ENCODE measurements at regions of chr1 and their contacts with region 1.

Region 1: DNA sequence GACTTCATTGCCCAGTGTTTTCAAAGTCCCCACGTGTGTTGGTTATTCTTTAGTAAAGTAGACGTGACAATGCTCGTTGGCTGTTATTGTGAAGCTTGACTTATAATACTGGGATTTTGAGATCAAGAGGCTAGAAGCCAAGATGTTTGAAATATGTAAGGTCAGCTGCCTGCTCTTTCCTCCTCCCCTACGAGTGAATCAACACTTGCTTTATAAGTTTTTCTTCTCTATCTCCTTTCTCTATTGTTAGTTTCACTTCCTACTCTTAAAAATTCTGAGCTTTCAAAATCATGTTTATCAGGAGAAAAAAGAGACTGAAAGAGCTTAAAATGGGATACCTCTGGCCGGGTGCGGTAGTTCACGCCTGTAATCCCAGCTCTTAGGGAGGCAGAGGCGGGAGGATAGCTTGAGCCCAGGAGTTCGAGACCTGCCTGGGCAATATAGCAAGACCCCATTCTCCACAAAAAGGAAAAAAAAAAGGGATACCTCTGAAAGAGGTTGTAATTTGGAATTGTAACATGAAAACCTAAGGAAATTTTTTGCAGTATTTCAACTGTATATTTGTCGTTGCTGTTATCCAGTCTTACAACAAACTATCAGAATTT is 72.0 kb downstream of the EPB41 start:
- DNase-seq: no peak
- H3K4me3 ChIP-seq: no peak overlapping the region
- H3K27ac ChIP-seq: no peak overlapping the region
- H3K4me1 ChIP-seq: no peaks in the 10 kb centered on the region
- H3K27me3 ChIP-seq: no peaks in the 10 kb centered on the region
- CTCF ChIP-seq: no peak

Region 2: DNA sequence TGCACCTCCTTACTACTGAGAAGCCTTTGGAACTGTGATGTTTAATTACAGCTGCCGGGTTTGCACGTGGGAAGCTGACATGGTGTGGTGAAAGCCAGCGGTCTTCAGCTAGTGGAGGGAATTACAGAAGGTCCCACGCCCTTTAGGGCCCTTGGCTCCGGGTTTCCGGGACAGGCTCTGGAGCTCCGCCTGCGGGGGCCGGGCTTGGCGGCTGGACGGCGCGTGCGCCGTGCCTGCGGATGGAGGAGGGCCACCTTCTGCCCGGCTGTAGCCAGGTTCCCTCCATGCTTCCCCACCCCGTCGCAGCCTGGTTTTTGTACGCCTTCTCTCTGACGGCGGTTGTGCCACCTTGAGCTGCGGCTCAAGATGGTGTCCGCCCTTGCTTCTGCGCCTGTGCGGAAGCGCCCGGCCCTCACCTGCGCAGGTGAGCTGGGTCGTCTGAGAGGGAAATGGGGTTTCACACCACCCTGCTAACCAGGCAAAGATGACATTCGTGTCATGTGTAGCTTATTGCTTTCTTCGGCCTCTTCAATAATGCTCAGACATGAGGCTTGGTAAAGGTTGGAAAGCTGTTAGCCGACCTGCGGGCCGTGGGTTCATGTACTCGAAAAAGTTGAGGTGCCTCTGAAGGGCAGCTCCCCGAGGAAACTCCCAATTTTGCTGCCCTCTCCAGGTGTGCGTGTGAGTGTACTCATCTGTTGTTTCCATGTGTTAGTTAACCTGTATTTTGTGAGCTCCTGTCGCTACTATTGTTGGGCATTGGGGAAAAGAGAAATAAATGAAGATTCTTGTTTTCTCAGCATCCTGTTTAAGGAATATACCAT is 211.1 kb before region 1 on chr1:
- intact Hi-C with region 1: no loop called
- DNase-seq: peak; percentile 66 to 80
- H3K4me3 ChIP-seq: peak overlapping the region; percentile 27 to 49
- H3K27ac ChIP-seq: no peak overlapping the region
- H3K4me1 ChIP-seq: peaks cover 0 to 14% (median 10%) of the 10 kb centered on the region in 4 donors
- H3K27me3 ChIP-seq: no peaks in the 10 kb centered on the region
- CTCF ChIP-seq: no peak

Region 3: DNA sequence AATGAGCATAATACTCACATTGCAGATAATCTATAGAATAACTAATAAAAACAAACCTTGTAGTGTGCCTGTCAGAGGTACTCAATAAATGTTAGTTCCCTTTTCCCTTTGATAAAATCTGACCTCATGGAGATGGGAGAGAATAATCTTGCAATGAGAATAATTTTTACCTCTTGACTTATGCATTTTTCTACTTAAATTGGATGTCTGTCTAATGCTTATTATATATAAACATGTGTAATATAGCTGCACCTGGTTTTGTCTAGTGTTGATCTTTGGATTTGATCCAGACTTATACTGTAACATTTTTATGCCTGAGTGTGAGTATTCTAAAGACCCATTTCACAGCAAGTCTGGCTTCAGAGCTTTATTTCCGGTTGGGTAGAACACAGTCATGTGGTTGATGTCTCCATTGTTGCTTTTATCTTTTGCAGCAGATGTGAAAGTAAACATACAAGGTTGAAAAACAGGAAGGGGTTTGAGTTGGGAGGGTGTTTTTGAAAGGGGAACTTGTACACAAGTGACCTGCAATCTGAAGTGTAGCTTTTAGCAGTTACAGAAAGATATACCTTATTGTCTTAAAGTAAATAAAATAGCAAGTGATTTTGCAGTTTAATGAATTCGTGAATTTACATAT is 59.7 kb before region 1 on chr1:
- intact Hi-C with region 1: no loop called
- DNase-seq: no peak
- H3K4me3 ChIP-seq: no peak overlapping the region
- H3K27ac ChIP-seq: no peak overlapping the region
- H3K4me1 ChIP-seq: peaks cover 0 to 13% (median 8%) of the 10 kb centered on the region in 4 donors
- H3K27me3 ChIP-seq: no peaks in the 10 kb centered on the region
- CTCF ChIP-seq: no peak

Region 4: GRCh38 chr1:28950449-28950848 is 36.0 kb before region 1 on chr1:
- intact Hi-C with region 1: loop called (anchors 10 kb)
- DNase-seq: no peak
- H3K4me3 ChIP-seq: no peak overlapping the region
- H3K27ac ChIP-seq: no peak overlapping the region
- H3K4me1 ChIP-seq: no peaks in the 10 kb centered on the region
- H3K27me3 ChIP-seq: no peaks in the 10 kb centered on the region
- CTCF ChIP-seq: no peak

Region 5: GRCh38 chr1:29964718-29965533 is 978.5 kb after region 1 on chr1:
- intact Hi-C with region 1: no loop called
- DNase-seq: no peak
- H3K4me3 ChIP-seq: no peak overlapping the region
- H3K27ac ChIP-seq: no peak overlapping the region
- H3K4me1 ChIP-seq: no peaks in the 10 kb centered on the region
- H3K27me3 ChIP-seq: peaks cover 0 to 45% of the 10 kb centered on the region in 2 donors
- CTCF ChIP-seq: no peak